ENCODE measurements at regions of chr10 and their contacts with region 1.

Region 1: DNA sequence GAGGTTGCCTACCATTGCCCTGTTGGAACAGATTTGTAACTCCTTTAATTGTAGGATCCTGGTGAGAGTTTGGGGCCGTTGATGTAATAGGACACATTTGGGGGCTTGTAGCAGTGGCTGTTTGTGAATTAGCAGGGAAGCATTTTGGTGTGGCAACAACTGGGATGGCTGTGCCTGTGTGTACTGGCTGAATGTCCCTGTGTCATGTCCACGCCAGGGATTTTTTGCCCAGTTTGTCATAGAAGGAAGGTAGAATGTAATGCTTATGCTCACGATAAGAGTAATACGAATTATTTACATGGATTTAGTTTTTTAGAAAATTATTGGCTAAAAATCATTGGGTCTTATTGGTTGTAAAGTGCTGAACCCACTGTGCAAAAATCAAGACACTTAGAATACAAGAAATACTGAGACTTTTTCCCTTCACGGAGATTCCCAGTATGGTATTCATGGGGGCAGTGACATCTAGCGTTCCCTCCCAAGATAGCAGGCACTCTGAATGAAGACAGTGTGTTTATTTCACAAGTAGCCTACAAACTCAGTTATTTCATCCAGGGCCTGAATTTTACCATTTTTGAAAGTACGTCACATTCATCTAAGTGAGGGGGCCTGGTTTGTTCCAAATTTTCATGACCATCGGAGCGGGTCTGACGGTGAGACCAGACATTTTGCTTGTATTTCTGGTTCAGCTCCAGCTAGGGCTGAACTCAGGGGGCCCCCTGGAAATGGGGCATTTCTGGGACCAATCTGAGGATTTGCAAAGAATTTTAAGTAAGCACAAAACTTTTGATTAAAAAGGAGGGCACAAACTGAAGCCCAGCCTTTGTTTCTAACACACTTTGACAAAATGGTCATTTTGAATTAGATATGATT is 74.7 kb downstream of the CACNB2 start:
- DNase-seq: peak; percentile 46
- H3K4me3 ChIP-seq: no peak overlapping the region; a peak in 1 of 4 replicates
- H3K27ac ChIP-seq: no peak overlapping the region
- H3K4me1 ChIP-seq: no peaks in the 10 kb centered on the region; a peak in 1 of 4 replicates
- H3K27me3 ChIP-seq: no peaks in the 10 kb centered on the region; the same call in 1 of the 2 replicates
- CTCF ChIP-seq: peak; percentile 93
- EP300 ChIP-seq: no peak
- RAD21 ChIP-seq: peak; percentile 93

Region 2: GRCh38 chr10:17904574-17904973 is 310.4 kb before region 1 on chr10:
- CTCF ChIA-PET with region 1: interaction called, 22 read pairs
- POLR2A ChIA-PET with region 1: no interaction called
- DNase-seq: no peak
- H3K4me3 ChIP-seq: no peak overlapping the region
- H3K27ac ChIP-seq: no peak overlapping the region
- H3K4me1 ChIP-seq: no peaks in the 10 kb centered on the region
- H3K27me3 ChIP-seq: no peaks in the 10 kb centered on the region
- CTCF ChIP-seq: no peak
- EP300 ChIP-seq: no peak
- RAD21 ChIP-seq: no peak

Region 3: DNA sequence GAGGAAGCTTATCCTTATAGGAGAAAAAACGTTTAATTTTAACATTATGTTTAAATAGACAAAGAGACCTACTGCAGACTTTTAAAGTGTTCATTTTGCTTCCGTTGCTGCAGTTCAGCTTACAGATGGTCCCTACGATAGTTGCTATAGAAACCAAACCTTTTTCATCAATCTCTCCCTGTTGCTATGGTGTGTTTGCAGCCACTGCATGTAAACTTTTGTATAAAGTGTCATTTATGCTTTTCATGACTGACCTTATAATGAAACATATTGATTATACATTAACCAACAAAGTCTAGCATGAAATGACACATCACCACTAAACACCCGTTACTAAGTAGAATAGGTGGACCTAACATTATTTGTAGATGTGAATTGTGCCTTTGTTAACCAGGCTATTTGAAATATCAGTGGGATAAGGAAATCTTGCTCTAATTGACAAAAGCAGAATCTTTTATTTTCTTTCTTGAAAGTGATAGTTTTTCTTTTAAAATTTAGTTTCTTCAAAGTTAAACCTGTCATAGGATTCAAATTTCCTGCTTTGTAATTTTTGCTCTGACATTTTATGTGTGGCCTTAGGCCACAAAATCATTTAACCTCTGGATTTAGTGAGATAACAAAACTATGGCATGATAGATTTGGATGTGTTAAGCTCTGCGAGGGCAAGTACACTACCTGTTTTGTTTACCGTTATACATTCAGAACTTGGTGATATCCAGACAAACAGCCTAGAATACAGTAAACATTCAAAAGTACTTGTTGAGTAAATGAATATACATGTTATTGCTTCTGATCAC is 10.7 kb before region 1 on chr10:
- CTCF ChIA-PET with region 1: interaction called, 10 read pairs
- POLR2A ChIA-PET with region 1: no interaction called
- DNase-seq: peak; percentile 38
- H3K4me3 ChIP-seq: no peak overlapping the region
- H3K27ac ChIP-seq: peak overlapping the region in 1 of 2 experiments; percentile 89; a peak in 2 of 4 replicates
- H3K4me1 ChIP-seq: peaks cover 0 to 20% of the 10 kb centered on the region in 2 experiments; a peak in 3 of 4 replicates
- H3K27me3 ChIP-seq: no peaks in the 10 kb centered on the region
- CTCF ChIP-seq: no peak
- EP300 ChIP-seq: peak in 1 of 2 experiments; percentile 44; a peak in 1 of 4 replicates
- RAD21 ChIP-seq: 0 out of 2 replicates have a peak, but pooled peaks have one; percentile 1

Region 4: DNA sequence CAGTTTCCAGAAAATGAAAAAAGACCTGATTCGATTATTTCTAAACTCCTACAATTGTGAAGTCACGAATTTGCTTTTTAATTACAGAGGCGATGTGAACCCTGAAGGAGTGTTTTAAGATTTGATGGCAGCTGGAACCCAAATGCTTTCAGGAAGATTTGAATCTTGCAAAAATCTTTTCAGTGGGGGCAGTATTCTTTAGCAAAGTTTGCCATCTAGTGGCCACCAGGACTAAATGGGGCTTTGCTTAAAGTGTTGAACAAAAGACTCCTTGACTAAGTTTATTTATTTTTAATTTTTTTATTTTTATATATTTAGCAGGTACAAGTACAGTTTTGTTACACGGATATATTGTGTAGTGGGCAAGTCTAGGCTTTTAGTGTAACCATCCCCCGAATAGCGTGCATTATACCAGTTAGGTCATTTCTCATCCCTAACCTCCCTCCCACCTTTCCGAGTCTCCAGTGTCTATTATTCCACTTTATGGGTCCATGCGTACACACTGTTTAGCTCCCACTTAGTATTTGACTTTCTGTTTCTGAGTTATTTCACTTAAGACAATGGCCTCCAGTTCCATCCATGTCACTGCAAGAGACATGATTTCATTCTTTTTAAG is 24.1 kb after region 1 on chr10:
- CTCF ChIA-PET with region 1: interaction called, 19 read pairs
- POLR2A ChIA-PET with region 1: no interaction called
- DNase-seq: peak; percentile 46
- H3K4me3 ChIP-seq: no peak overlapping the region; a peak in 1 of 4 replicates
- H3K27ac ChIP-seq: no peak overlapping the region
- H3K4me1 ChIP-seq: peaks cover 0 to under 1% of the 10 kb centered on the region in 2 experiments; a peak in 1 of 4 replicates
- H3K27me3 ChIP-seq: no peaks in the 10 kb centered on the region
- CTCF ChIP-seq: peak; percentile 71
- EP300 ChIP-seq: no peak
- RAD21 ChIP-seq: peak; percentile 82

Measured in SK-N-SH (cell line).